Activated CD4-positive, alpha-beta memory T cell treated with anti-CD3 and anti-CD28 coated beads for 36 hours (primary cell): ENCODE measurements at regions of chr2 and their contacts with region 1.

Region 1: GRCh38 chr2:65382776-65383357 is 49.5 kb downstream of the SPRED2 start:
- DNase-seq: peak; percentile 96
- H3K4me3 Mint-ChIP-seq: no peak overlapping the region
- H3K27ac Mint-ChIP-seq: no peak overlapping the region
- H3K4me1 Mint-ChIP-seq: peaks cover 28% of the 10 kb centered on the region
- H3K27me3 Mint-ChIP-seq: peaks cover 4% of the 10 kb centered on the region

Region 2: GRCh38 chr2:65292461-65293011 is 90.3 kb before region 1 on chr2:
- CTCF ChIA-PET with region 1: no interaction called
- POLR2A ChIA-PET with region 1: no interaction called
- intact Hi-C with region 1: no loop called
- DNase-seq: no peak
- H3K4me3 Mint-ChIP-seq: no peak overlapping the region
- H3K27ac Mint-ChIP-seq: no peak overlapping the region
- H3K4me1 Mint-ChIP-seq: peaks cover 5% of the 10 kb centered on the region
- H3K27me3 Mint-ChIP-seq: peaks cover 16% of the 10 kb centered on the region

Region 3: DNA sequence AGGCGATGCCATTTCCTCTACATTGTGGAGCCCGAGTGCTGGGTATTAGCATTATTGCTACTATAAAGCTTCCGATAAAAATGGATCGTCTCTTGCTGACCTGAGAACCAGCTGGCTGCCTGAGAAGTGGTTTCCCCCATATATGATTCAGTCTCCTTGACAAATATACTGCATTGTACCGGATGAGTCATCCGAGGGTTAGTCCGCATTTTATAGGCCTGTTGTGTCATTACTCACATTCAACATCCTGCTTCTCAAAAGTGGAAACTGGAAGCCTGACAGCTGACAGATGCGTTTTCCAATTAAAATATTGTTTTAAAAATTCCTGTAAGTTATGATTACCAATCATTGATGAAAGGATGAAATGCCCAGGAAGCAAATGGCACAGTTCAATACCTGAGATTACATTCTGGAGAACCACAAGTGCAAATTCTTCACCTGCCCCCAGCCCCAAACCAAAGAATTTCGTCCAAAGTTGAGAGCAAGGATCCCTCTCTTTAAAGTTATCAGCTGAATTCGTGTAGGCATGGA is 16.2 kb before region 1 on chr2:
- CTCF ChIA-PET with region 1: interaction called, 5 read pairs
- POLR2A ChIA-PET with region 1: interaction called, 4 read pairs
- intact Hi-C with region 1: loop called (anchors 2 kb)
- DNase-seq: peak; percentile 56
- H3K4me3 Mint-ChIP-seq: no peak overlapping the region
- H3K27ac Mint-ChIP-seq: no peak overlapping the region
- H3K4me1 Mint-ChIP-seq: peaks cover 19% of the 10 kb centered on the region
- H3K27me3 Mint-ChIP-seq: no peaks in the 10 kb centered on the region

Region 4: GRCh38 chr2:65416945-65417344 is 34.1 kb after region 1 on chr2:
- CTCF ChIA-PET with region 1: no interaction called
- POLR2A ChIA-PET with region 1: no interaction called
- intact Hi-C with region 1: loop called (anchors 5 kb)
- DNase-seq: no peak
- H3K4me3 Mint-ChIP-seq: no peak overlapping the region
- H3K27ac Mint-ChIP-seq: no peak overlapping the region
- H3K4me1 Mint-ChIP-seq: peaks cover 27% of the 10 kb centered on the region
- H3K27me3 Mint-ChIP-seq: no peaks in the 10 kb centered on the region

Region 5: DNA sequence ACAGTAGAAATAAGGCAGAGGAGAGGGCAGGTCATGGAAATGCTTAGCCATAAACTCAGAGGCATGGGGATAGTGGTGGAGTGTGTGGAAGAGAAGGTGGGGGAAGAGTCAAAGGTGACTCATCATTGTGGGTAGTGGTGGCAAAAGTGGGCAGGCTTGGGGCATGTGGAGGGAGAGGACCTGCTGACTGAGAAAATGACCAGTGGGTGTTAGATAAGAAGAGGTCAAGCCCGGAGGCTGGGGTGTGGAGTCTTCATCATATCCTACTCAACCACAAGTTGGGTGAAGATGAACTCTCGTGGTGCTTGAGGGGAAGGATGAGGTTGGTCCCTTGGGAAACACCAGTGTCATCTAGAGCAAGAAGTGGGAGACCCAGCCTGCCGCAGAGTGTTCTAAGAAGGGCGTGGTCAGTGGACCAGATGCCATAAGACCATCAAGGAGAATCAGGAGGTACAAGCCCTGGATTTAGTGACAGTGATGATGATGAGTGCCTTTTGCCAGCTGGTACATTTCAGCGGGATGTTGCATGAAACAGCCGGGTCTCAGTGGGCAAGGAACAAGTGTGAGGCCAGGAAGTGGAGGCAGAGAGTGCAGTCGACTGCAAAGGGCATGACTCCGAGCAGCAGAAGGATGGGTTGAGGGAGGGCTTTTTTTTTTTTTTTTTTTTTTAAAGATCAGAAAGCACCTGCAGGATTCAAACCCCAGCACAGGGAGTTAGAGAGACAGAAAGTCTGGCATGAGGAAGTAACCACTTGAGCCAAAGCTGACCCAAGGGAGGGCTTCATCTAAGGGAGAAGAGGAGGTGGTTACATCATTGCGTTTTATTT is 172.1 kb after region 1 on chr2:
- CTCF ChIA-PET with region 1: interaction called, 4 read pairs
- POLR2A ChIA-PET with region 1: interaction called, 3 read pairs
- intact Hi-C with region 1: loop called (anchors 1 kb)
- DNase-seq: peak; percentile 58
- H3K4me3 Mint-ChIP-seq: no peak overlapping the region
- H3K27ac Mint-ChIP-seq: no peak overlapping the region
- H3K4me1 Mint-ChIP-seq: peaks cover 11% of the 10 kb centered on the region
- H3K27me3 Mint-ChIP-seq: peaks cover 6% of the 10 kb centered on the region